Right lobe of liver (tissue), 6 donors: ENCODE measurements at regions of chr7 and their contacts with region 1.

Region 1: DNA sequence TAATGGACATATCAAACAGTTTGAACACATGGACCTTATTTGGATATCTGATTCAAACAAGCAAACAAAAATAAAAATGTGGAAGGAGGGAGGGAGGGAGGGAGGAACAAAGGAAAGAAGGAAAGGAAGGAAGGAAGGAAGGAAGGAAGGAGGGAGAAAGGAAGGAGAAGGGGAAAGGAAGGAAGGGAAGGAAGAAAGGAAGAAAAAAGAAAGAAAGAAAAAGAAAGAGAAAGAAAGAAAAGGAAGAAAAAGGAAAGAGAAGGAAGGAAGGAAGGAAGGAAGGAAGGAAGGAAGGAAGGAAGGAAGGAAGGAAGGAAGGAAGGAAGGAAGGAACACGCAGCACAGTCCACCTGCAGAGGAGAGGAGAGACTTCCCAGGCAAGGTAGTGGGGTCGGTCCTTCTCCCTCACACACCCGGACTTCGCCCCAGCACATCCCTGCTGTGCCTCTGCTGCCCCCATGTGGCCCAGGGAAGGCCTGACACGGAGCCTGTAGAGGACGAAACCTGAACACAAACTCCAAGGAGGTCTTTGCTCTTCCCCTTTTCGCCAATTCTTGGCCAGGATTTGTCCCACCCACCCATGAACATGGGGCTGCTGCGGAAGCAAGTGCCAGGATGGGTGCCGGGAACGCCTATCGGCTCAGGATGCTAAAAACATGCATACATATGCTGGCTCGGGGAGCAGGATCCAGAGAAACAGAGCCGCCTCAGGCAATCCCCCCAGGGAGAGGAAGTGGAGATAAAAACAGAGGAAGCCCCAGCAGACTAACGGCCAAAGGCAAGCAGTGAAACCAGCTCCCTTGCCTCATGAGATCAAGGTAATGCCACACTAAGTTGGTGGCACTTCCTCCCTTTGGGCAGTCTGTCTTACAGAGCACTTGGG is 52.3 kb upstream of the DGKI start:
- DNase-seq: peak; percentile 81 to 85 (median 83)
- ATAC-seq: peak; percentile 90 to 97 (median 96)
- H3K4me3 ChIP-seq: no peak overlapping the region
- H3K27ac ChIP-seq: no peak overlapping the region
- H3K4me1 ChIP-seq: no peaks in the 10 kb centered on the region
- H3K27me3 ChIP-seq: no peaks in the 10 kb centered on the region
- CTCF ChIP-seq: peak; percentile 86 to 94 (median 89)
- POLR2A ChIP-seq: no peak

Region 2: GRCh38 chr7:137642472-137642871 is 256.6 kb before region 1 on chr7:
- intact Hi-C with region 1: no loop called
- DNase-seq: no peak
- ATAC-seq: no peak
- H3K4me3 ChIP-seq: no peak overlapping the region
- H3K27ac ChIP-seq: no peak overlapping the region
- H3K4me1 ChIP-seq: no peaks in the 10 kb centered on the region
- H3K27me3 ChIP-seq: no peaks in the 10 kb centered on the region
- CTCF ChIP-seq: no peak
- POLR2A ChIP-seq: no peak

Region 3: GRCh38 chr7:137656227-137656849 is 242.7 kb before region 1 on chr7:
- intact Hi-C with region 1: loop called (anchors 5 to 10 kb)
- DNase-seq: peak; percentile 74 to 78 (median 77)
- ATAC-seq: peak; percentile 87 to 97 (median 94)
- H3K4me3 ChIP-seq: no peak overlapping the region
- H3K27ac ChIP-seq: no peak overlapping the region
- H3K4me1 ChIP-seq: no peaks in the 10 kb centered on the region
- H3K27me3 ChIP-seq: no peaks in the 10 kb centered on the region
- CTCF ChIP-seq: peak; percentile 76 to 85 (median 81)
- POLR2A ChIP-seq: no peak

Region 4: GRCh38 chr7:137816696-137817320 is 82.3 kb before region 1 on chr7:
- intact Hi-C with region 1: loop called in 1 of 2 experiments (anchors 10 kb)
- DNase-seq: no peak
- ATAC-seq: peak in 2 of 4 donors; percentile 62
- H3K4me3 ChIP-seq: no peak overlapping the region
- H3K27ac ChIP-seq: no peak overlapping the region
- H3K4me1 ChIP-seq: no peaks in the 10 kb centered on the region
- H3K27me3 ChIP-seq: no peaks in the 10 kb centered on the region
- CTCF ChIP-seq: peak; percentile 16 to 55 (median 38)
- POLR2A ChIP-seq: no peak

Region 5: GRCh38 chr7:138008547-138009349 is 109.7 kb after region 1 on chr7:
- intact Hi-C with region 1: loop called in 1 of 2 experiments (anchors 5 kb)
- DNase-seq: no peak
- ATAC-seq: peak; percentile 84 to 95 (median 92)
- H3K4me3 ChIP-seq: no peak overlapping the region
- H3K27ac ChIP-seq: no peak overlapping the region
- H3K4me1 ChIP-seq: peaks cover 0 to 4% (median 0%) of the 10 kb centered on the region in 4 donors
- H3K27me3 ChIP-seq: no peaks in the 10 kb centered on the region
- CTCF ChIP-seq: peak; percentile 86 to 93 (median 90)
- POLR2A ChIP-seq: no peak